ENCODE measurements at regions of chr5 and their contacts with region 1.

Region 1: GRCh38 chr5:50962934-50963872 is 296.8 kb downstream of the PARP8 start:
- DNase-seq: peak; percentile 56 to 96 (median 82)

Region 2: DNA sequence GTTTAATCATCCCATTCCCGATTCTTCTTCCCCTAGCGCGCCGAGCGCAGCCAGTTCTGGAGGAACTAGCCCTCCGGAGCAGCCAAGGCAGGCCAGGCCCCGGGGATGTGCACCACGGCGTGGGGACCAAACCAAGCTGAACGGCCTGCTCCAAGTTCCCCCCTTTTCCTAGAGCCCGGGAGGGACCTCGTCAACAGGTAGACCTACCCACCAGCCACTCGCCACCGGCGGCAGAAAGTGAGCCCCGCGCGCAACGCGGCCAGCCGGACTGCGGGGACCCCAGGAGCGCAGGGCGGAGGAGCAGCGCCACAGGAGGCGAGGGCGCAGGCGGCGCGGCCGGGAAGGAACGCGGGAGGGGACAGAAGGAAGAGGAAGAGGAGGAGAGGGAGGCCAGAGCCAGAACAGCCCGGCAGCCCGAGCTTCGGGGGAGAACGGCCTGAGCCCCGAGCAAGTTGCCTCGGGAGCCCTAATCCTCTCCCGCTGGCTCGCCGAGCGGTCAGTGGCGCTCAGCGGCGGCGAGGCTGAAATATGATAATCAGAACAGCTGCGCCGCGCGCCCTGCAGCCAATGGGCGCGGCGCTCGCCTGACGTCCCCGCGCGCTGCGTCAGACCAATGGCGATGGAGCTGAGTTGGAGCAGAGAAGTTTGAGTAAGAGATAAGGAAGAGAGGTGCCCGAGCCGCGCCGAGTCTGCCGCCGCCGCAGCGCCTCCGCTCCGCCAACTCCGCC is 419.7 kb after region 1 on chr5 and contains the start of gene ISL1:
- intact Hi-C with region 1: loop called (anchors 10 kb)
- DNase-seq: peak in 3 of 10 donors; percentile 66 to 84 (median 71)

Region 3: GRCh38 chr5:51960617-51961115 is 997.5 kb after region 1 on chr5:
- intact Hi-C with region 1: loop called (anchors 5 kb)
- DNase-seq: no peak

Region 4: GRCh38 chr5:52007230-52007858 is 1044.1 kb after region 1 on chr5:
- intact Hi-C with region 1: loop called (anchors 2 kb)
- DNase-seq: peak in 1 of 10 donors; percentile 8

Region 5: DNA sequence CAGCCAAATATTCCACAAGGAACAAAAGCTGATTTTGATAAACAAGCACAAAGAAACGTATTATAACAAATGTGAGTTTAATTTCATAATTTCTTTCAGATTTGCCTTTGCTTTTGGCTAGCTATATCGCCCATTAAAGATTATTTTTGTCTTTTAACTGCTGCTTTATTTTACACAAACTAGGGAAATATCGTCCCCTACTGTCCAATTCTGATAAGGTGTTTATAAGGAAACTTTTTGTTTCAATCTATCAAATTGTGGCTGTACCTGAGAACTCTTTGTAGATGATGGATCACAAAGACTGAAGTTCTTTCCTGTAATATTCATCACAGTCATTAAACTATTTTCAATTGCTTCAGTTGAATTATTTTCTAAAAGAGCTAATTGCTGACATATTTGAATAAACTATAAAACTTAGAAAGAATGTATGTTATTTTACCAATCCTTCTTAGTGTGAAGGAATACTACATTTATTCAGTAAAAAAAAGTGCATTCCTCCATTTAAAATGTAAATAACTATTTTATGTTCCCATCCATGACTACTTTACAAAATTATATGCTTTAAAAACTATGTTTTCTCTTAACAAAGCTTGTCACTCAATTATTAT is 1393.2 kb after region 1 on chr5:
- intact Hi-C with region 1: loop called (anchors 10 kb)
- DNase-seq: no peak

Region 6: GRCh38 chr5:52560366-52560765 is 1597.2 kb after region 1 on chr5:
- intact Hi-C with region 1: loop called (anchors 10 kb)
- DNase-seq: no peak

Region 7: GRCh38 chr5:52657247-52657645 is 1694.0 kb after region 1 on chr5:
- intact Hi-C with region 1: loop called (anchors 2 kb)
- DNase-seq: no peak